ENCODE measurements at regions of chr15 and their contacts with region 1.

Region 1: GRCh38 chr15:34342737-34343575 is at the starts of genes NOP10 and NUTM1:
- DNase-seq: peak; percentile 93 to 95 (median 94)
- ATAC-seq: peak; percentile 99
- H3K4me3 ChIP-seq: peak within 1 kb of the TSS; percentile 68
- H3K4me1 ChIP-seq: no peaks in the 10 kb centered on the region
- CTCF ChIP-seq: peak; percentile 92
- total RNA-seq, gene NOP10: 90.6 to 129 (median 115) TPM
- total RNA-seq, gene NUTM1: not detected

Region 2: GRCh38 chr15:34367101-34368081 is 24.4 kb after region 1 on chr15 and contains the start of gene LPCAT4:
- intact Hi-C with region 1: loop called in 1 of 2 experiments (anchors 2 kb)
- DNase-seq: peak; percentile 93 to 96 (median 96)
- ATAC-seq: peak; percentile 86
- H3K4me3 ChIP-seq: peak within 1 kb of the TSS; percentile 67
- H3K4me1 ChIP-seq: peaks cover 40% of the 10 kb centered on the region
- CTCF ChIP-seq: peak; percentile 95
- total RNA-seq, gene LPCAT4: 144 to 236 (median 154) TPM

Region 3: GRCh38 chr15:34812369-34812768 is 469.4 kb after region 1 on chr15:
- intact Hi-C with region 1: no loop called
- DNase-seq: no peak
- ATAC-seq: no peak
- H3K4me3 ChIP-seq: no peak overlapping the region
- H3K4me1 ChIP-seq: no peaks in the 10 kb centered on the region
- CTCF ChIP-seq: no peak

Measured in mucosa of descending colon (tissue), 3 donors.